ENCODE measurements at regions of chr19 and their contacts with region 1.

Region 1: GRCh38 chr19:5803752-5804515 is 933 bp upstream of the NRTN start:
- DNase-seq: no peak
- H3K4me3 ChIP-seq: peak overlapping the region; percentile 10; the same call in 1 of the 2 replicates
- H3K27me3 ChIP-seq: peaks cover 9% of the 10 kb centered on the region
- CTCF ChIP-seq: peak; percentile 95

Region 2: DNA sequence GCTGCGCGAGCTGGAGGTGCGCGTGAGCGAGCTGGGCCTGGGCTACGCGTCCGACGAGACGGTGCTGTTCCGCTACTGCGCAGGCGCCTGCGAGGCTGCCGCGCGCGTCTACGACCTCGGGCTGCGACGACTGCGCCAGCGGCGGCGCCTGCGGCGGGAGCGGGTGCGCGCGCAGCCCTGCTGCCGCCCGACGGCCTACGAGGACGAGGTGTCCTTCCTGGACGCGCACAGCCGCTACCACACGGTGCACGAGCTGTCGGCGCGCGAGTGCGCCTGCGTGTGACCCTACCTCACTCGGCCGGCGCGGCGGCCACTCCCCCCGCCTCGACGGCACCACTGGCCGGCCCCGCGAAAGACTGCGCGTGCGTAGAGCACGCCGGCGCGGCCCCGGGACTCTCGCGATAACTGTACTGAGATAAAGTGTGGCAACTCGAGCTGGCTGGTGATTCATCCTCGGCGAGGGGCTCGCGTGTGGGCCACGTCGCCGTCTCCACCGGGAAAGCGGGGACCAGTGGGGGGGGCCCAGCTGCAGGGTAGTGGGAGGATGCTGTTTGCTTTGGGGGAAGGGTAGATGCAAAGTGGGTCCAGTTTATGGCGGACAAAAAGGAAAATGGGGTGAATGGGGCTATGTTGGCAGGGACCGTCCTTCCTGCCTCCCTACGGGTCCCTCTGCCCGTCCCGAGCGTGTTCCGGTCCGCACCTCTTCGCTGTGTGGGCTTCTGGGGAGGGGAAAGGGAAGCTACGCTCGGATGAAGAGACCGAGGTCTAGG is 24.1 kb after region 1 on chr19:
- CTCF ChIA-PET with region 1: interaction called, 21 read pairs
- POLR2A ChIA-PET with region 1: no interaction called
- DNase-seq: peak; percentile 51
- H3K4me3 ChIP-seq: peak overlapping the region; percentile 70
- H3K27me3 ChIP-seq: peaks cover 6% of the 10 kb centered on the region; the same call in 1 of the 2 replicates
- CTCF ChIP-seq: no peak

Region 3: DNA sequence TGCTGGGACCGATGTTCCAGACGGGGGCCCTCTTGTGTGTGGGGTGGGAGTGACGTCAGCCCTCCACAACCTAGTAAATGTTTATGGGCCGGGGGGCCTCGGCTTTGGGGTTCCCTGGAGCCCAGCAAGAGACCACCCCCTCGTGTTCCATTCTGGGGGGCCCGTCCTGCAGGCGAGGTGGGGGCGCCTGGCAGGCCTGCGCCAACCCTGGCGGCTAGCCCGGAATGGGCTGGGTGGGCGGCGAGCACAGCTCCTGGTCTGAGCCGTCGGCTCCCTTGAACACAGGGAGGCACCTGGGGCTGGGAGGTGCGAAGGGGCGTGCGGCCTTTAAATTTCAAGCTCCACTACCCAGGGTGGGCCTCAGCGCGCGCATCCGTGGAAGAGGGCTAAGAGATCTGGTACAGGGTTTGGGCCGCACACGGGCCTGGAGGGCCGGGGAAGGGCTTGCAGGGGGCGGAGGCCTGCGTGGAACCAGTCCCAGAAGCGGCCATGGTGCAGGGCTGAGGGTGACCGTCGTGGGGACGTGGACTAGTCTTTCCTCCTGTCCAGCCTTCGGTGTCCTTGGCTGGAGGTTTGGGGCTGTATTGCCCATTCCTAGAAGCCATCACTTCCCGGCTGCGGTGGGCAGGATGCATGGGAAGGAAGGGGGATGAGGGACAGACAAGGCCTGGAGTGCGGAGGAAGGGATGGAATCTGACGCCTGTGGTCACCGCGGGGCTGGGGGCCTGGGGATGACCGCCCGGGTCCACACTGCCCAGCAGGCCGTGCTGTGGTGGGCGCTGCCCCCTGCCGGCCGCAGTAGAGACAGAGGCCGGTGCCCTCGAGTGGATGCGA is 88.2 kb after region 1 on chr19:
- CTCF ChIA-PET with region 1: interaction called, 80 read pairs
- POLR2A ChIA-PET with region 1: no interaction called
- DNase-seq: no peak
- H3K4me3 ChIP-seq: no peak overlapping the region
- H3K27me3 ChIP-seq: no peaks in the 10 kb centered on the region
- CTCF ChIP-seq: peak; percentile 91

Region 4: GRCh38 chr19:5904352-5905113 is 100.6 kb after region 1 on chr19 and contains the start of gene VMAC:
- CTCF ChIA-PET with region 1: interaction called, 40 read pairs
- POLR2A ChIA-PET with region 1: no interaction called
- DNase-seq: peak; percentile 100
- H3K4me3 ChIP-seq: peak within 1 kb of the TSS; percentile 100
- H3K27me3 ChIP-seq: no peaks in the 10 kb centered on the region
- CTCF ChIP-seq: no peak
- polyA plus RNA-seq, gene VMAC: 3.3 and 4.2 TPM in 2 replicates

Region 5: DNA sequence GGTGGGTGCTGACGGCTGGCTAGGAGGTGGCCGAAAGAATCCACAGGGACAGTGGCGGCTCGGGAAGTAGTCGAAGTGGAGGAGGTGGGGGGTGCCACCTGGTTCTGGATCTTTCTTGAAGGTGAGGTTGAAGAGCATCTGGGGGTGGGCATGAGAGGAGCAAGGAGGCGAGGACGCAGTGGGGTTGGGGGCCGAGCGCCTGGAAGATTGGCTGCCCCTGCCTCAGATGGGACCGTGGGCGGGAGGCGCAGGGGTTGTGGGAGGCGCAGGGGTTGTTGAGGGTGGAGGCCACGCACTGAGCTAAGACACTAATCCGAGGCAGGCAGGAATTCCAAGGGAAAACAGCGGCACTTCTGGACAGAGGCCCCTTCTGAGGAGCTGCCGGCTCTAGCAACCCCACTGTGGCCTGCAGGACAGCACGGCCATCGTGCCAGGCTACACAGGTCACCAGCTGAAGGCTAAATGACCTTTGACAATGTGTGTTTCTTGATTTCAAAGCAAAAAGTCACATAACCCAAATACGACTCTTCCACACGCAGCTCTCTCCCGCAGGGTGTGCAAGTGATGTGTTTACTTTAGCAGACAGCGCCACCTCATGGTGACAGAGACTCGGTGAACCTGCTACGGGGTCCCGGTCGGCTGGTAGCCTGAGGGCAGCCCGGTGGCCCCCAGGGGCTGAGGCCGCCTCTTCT is 218.1 kb after region 1 on chr19:
- CTCF ChIA-PET with region 1: interaction called, 17 read pairs
- POLR2A ChIA-PET with region 1: no interaction called
- DNase-seq: no peak
- H3K4me3 ChIP-seq: no peak overlapping the region
- H3K27me3 ChIP-seq: no peaks in the 10 kb centered on the region
- CTCF ChIP-seq: peak; percentile 75

Measured in BJ (cell line).